Activated T-helper 1 cell treated with anti-CD3 and anti-CD28 coated beads, Interleukin-12 subunit alpha, Interleukin-12 subunit beta, Interleukin-2, Interleukin-4 antibody, amounts not matched to agents 30 ng/mL and 10 ng/mL and 1 ng/mL, durations not matched to agents 14 hours and 24 hours and 36 hours (primary cell): ENCODE measurements at regions of chr12 and their contacts with region 1.

Region 1: DNA sequence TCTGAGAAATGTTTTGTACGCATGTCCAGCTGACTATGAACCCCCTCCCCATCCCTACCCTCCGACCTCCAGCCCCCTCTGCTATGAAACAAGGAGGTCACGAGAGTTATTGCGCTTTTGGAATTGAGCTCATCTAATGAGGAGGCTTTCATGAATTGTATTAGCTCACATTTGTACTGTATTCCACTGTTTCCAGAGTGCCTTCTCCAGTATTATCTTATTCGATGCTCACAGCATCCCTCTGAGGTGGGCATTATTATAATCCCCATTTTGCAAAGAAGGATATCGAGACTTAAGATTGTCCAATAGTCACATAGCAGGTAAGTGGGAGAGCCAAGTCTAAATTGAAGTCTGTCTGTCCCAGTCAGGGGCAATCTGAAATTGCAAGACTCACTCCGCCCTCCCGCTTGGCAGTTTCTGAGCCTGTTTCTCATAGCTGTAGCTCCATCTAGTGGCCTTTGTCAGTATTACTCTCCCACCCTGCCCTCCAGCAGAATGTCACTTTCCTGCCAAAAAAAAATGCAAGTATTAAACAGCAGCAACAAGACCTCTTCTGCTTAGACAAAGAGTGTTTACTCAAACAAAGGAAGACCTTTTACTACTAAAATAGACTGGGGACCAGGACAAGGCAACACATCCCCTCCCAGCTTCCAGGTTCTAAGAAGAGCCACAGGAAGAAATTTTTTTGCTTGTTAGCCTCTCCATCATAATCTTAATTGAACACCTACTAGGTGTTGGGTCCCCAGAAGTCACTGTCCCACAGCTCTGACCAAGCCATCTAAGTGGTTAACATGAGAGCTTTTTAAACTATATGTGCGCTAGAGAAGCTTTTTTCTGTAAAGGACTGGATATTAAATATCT is 48.6 kb upstream of the TMEM233 start:
- DNase-seq: peak; percentile 33
- H3K4me3 Mint-ChIP-seq: no peak overlapping the region
- H3K27ac Mint-ChIP-seq: no peak overlapping the region
- H3K4me1 Mint-ChIP-seq: no peaks in the 10 kb centered on the region
- H3K27me3 Mint-ChIP-seq: peaks cover 4% of the 10 kb centered on the region

Region 2: GRCh38 chr12:118979763-118980406 is 565.1 kb before region 1 on chr12:
- intact Hi-C with region 1: loop called (anchors 2 kb)
- DNase-seq: no peak
- H3K4me3 Mint-ChIP-seq: no peak overlapping the region
- H3K27ac Mint-ChIP-seq: no peak overlapping the region
- H3K4me1 Mint-ChIP-seq: no peaks in the 10 kb centered on the region
- H3K27me3 Mint-ChIP-seq: peaks cover 13% of the 10 kb centered on the region

Region 3: GRCh38 chr12:119115296-119115905 is 429.6 kb before region 1 on chr12:
- intact Hi-C with region 1: loop called (anchors 10 kb)
- DNase-seq: no peak
- H3K4me3 Mint-ChIP-seq: no peak overlapping the region
- H3K27ac Mint-ChIP-seq: no peak overlapping the region
- H3K4me1 Mint-ChIP-seq: no peaks in the 10 kb centered on the region
- H3K27me3 Mint-ChIP-seq: no peaks in the 10 kb centered on the region

Region 4: GRCh38 chr12:119444456-119445044 is 100.4 kb before region 1 on chr12:
- intact Hi-C with region 1: loop called (anchors 1 kb)
- DNase-seq: peak; percentile 23
- H3K4me3 Mint-ChIP-seq: no peak overlapping the region
- H3K27ac Mint-ChIP-seq: no peak overlapping the region
- H3K4me1 Mint-ChIP-seq: no peaks in the 10 kb centered on the region
- H3K27me3 Mint-ChIP-seq: peaks cover 3% of the 10 kb centered on the region

Region 5: GRCh38 chr12:119601877-119602733 is 57.1 kb after region 1 on chr12:
- intact Hi-C with region 1: no loop called
- DNase-seq: no peak
- H3K4me3 Mint-ChIP-seq: no peak overlapping the region
- H3K27ac Mint-ChIP-seq: no peak overlapping the region
- H3K4me1 Mint-ChIP-seq: no peaks in the 10 kb centered on the region
- H3K27me3 Mint-ChIP-seq: peaks cover 20% of the 10 kb centered on the region